CD14-positive monocyte (primary cell): ENCODE measurements at regions of chr19 and their contacts with region 1.

Region 1: GRCh38 chr19:1131738-1132551 is 28.2 kb downstream of the GPX4 start:
- DNase-seq: peak; percentile 92 to 96 (median 95)
- H3K4me3 ChIP-seq: peak overlapping the region; percentile 64 to 82 (median 64)
- H3K4me3 Mint-ChIP-seq: peak overlapping the region; percentile 89 to 93
- H3K27ac ChIP-seq: peak overlapping the region; percentile 87 to 91
- H3K27ac Mint-ChIP-seq: peak overlapping the region; percentile 89 to 95 (median 91)
- H3K4me1 ChIP-seq: peaks cover 38 to 44% of the 10 kb centered on the region in 2 donors
- H3K4me1 Mint-ChIP-seq: peaks cover 39% of the 10 kb centered on the region
- H3K27me3 ChIP-seq: no peaks in the 10 kb centered on the region
- H3K27me3 Mint-ChIP-seq: peaks cover 0 to 5% (median 0%) of the 10 kb centered on the region in 3 donors
- CTCF ChIP-seq: peak; percentile 21

Region 2: DNA sequence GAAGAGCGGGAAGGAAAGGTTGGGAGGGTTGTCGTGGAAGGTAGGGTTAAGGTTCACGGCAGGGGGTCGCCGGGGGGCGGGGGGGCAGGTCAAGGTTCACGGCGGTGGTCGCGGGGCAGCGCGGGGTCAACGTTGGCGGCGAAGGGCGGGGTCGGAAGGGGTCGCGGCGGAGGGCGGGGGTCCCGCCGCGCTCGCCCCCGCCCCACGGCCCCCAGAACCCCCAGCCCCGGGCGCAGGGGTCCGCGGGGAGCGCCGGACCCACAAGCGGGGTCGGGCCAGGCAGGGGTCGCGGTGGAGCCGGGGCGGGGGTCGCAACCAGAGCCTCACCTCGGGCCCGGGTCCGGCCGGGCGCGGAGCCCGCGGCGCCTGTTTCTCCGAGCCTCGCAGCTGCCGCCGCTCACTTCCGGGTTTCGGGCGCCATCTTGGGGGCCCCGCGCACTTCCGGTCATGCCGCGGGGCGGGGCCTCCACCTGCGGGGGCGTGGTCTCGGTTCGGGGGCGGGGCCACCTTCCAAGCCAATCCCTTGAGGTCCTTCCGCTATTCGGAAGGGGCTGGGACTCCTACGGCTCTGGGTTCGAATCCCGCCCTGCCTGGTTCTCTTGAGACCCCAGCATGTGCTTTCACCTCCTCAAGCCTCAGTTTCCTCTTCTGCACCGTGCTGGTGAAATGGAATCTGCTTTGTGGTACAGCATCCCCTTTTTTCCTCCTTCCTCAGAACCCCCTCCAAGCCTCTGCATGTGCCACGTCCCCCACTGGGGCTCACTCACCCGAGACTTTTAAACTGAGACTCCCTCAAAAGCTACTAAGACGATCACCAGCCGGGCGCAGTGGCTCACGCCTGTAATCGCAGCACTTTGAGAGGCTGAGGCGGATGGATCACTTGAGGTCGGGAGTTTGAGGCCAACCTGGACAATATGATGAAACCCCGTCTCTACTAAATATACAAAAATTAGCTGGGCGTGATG is 42.2 kb after region 1 on chr19 and contains the start of gene SBNO2:
- intact Hi-C with region 1: loop called in 1 of 2 experiments (anchors 5 kb)
- DNase-seq: peak; percentile 76 to 88 (median 87)
- H3K4me3 ChIP-seq: peak within 1 kb of the TSS; percentile 59 to 99 (median 69)
- H3K4me3 Mint-ChIP-seq: peak within 1 kb of the TSS; percentile 94 to 95
- H3K27ac ChIP-seq: peak within 1 kb of the TSS; percentile 53 to 89
- H3K27ac Mint-ChIP-seq: peak within 1 kb of the TSS; percentile 91 to 97 (median 95)
- H3K4me1 ChIP-seq: peaks cover 77 to 90% of the 10 kb centered on the region in 2 donors
- H3K4me1 Mint-ChIP-seq: peaks cover 75% of the 10 kb centered on the region
- H3K27me3 ChIP-seq: no peaks in the 10 kb centered on the region
- H3K27me3 Mint-ChIP-seq: peaks cover 0 to 3% (median 0%) of the 10 kb centered on the region in 3 donors
- CTCF ChIP-seq: no peak
- polyA plus RNA-seq, gene SBNO2: 0.71 to 75.0 (median 2.6) TPM

Region 3: GRCh38 chr19:1189419-1189818 is 57.5 kb after region 1 on chr19:
- intact Hi-C with region 1: no loop called
- DNase-seq: no peak
- H3K4me3 ChIP-seq: no peak overlapping the region
- H3K4me3 Mint-ChIP-seq: no peak overlapping the region
- H3K27ac ChIP-seq: no peak overlapping the region
- H3K27ac Mint-ChIP-seq: no peak overlapping the region
- H3K4me1 ChIP-seq: peaks cover 10 to 19% of the 10 kb centered on the region in 2 donors
- H3K4me1 Mint-ChIP-seq: peaks cover 23% of the 10 kb centered on the region
- H3K27me3 ChIP-seq: no peaks in the 10 kb centered on the region
- H3K27me3 Mint-ChIP-seq: peaks cover 0 to 8% (median 4%) of the 10 kb centered on the region in 3 donors
- CTCF ChIP-seq: no peak

Region 4: GRCh38 chr19:1232652-1233072 is 100.7 kb after region 1 on chr19:
- intact Hi-C with region 1: no loop called
- DNase-seq: peak in 1 of 3 donors; percentile 40
- H3K4me3 ChIP-seq: no peak overlapping the region
- H3K4me3 Mint-ChIP-seq: no peak overlapping the region
- H3K27ac ChIP-seq: no peak overlapping the region
- H3K27ac Mint-ChIP-seq: peak overlapping the region in 3 of 7 donors; percentile 27 to 33 (median 28)
- H3K4me1 ChIP-seq: peaks cover 6 to 9% of the 10 kb centered on the region in 2 donors
- H3K4me1 Mint-ChIP-seq: peaks cover 7% of the 10 kb centered on the region
- H3K27me3 ChIP-seq: peaks cover 11 to 22% of the 10 kb centered on the region in 2 donors
- H3K27me3 Mint-ChIP-seq: peaks cover 13 to 30% (median 22%) of the 10 kb centered on the region in 3 donors
- CTCF ChIP-seq: no peak